ENCODE measurements at regions of chr2 and their contacts with region 1.

Region 1: GRCh38 chr2:178414266-178415247 is 36.4 kb downstream of the PRKRA start:
- DNase-seq: peak; percentile 68
- H3K4me3 ChIP-seq: peak overlapping the region; percentile 63
- CTCF ChIP-seq: peak; percentile 95

Region 2: DNA sequence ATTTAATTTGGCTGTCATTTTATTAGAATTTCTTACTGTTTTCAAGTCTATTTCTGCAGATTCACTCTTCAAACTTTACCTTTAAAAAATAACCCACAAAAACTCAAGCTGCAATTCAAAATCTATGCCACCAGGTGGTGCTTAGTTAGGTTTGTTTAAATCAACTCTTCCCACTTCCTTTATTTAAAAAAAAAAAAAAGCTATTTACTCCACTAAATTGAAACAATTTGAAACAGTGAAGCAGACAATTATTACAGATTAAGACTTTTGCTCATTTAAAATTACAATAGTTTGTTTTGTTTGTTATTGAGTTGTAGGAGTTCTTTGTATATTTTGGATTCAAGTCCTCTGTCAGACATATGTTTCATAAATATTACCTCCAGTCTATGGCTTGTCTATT is 642.0 kb before region 1 on chr2:
- CTCF ChIA-PET with region 1: interaction called, 11 read pairs
- POLR2A ChIA-PET with region 1: no interaction called
- DNase-seq: no peak
- H3K4me3 ChIP-seq: no peak overlapping the region
- CTCF ChIP-seq: peak; percentile 16

Region 3: GRCh38 chr2:177989029-177989885 is 425.3 kb before region 1 on chr2:
- CTCF ChIA-PET with region 1: interaction called, 20 read pairs
- POLR2A ChIA-PET with region 1: no interaction called
- DNase-seq: no peak
- H3K4me3 ChIP-seq: no peak overlapping the region
- CTCF ChIP-seq: no peak

Region 4: DNA sequence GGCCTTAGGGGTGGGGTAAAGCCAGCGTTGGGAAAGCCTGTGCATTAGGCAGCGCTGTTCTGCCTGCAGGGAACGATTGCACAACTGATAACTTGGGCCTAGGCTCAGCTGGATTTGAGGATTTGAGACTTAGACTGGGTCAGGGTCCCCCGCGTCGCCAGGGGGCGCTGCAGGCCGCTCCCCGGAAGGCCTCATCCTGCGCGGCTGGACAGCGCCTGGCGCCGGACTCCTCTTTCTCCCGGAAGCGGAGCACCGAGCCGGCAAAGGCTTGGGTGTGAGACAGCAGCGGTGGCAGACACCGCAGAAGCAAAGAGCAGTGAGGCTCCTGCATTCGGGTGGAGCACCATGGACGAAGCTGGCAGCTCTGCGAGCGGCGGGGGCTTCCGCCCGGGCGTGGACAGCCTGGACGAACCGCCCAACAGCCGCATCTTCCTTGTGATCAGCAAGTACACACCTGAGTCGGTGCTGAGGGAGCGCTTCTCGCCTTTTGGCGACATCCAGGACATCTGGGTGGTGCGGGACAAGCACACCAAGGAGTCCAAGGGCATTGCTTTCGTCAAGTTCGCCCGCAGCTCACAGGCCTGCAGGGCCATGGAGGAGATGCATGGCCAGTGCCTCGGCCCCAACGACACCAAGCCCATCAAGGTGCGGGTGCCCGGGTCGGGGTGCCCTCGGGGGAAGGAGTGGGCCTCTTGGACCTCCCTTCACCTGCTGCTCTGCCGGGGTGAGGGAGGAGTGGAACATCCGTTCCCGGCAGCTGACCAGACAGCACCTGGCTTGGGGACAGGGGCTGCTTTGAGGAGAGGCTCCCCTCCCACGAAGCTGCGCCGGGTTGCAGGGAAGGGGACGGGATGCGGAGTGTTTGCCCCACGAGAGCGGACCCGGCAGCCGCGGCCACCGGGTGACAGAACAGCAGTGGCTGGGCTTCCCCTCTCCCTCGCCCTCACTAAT is 302.1 kb before region 1 on chr2 and contains the start of gene RBM45:
- CTCF ChIA-PET with region 1: interaction called, 282 read pairs
- POLR2A ChIA-PET with region 1: interaction called, 3 read pairs
- DNase-seq: peak; percentile 38
- H3K4me3 ChIP-seq: peak within 1 kb of the TSS; percentile 74
- CTCF ChIP-seq: peak; percentile 98

Region 5: DNA sequence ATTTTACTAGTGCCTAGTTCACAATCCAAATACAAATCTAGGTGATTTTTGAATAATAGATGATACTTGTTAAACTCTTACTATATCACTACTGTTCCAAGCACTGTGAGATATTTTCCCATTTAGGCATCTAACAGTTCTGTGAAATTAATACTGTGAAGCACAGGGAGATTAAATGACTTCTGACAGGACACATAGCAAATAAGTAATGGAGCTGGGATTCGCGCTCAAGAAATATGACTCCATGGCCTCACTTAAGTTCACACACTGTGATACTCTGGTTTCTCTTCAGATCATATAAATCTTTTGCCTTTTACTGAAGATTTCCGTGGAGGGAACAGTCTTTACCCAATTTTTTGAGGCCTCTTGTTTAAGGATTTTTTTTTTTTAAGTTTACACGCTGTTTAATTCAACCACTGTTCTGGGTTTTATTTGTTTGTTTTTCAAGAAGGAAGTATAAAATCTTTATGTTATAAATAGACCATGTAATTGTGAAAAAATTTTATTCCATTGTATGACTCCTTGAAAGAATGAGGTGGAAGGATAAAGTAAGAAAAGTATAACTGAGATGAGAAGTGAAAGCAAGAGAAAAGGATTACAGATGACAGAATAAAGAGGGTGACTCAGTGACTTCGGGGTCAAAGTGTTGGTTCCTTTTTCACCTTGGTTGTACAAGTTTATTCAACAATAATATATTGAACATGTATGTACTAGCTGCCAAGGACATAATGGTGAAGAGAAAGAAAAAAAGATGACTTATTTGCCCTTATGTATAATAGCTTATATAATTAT is 272.1 kb before region 1 on chr2:
- CTCF ChIA-PET with region 1: interaction called, 231 read pairs
- POLR2A ChIA-PET with region 1: no interaction called
- DNase-seq: no peak
- H3K4me3 ChIP-seq: no peak overlapping the region
- CTCF ChIP-seq: no peak

Region 6: GRCh38 chr2:178397002-178397605 is 17.5 kb before region 1 on chr2:
- CTCF ChIA-PET with region 1: interaction called, 101 read pairs
- POLR2A ChIA-PET with region 1: no interaction called
- DNase-seq: no peak
- H3K4me3 ChIP-seq: no peak overlapping the region
- CTCF ChIP-seq: peak; percentile 42

Region 7: GRCh38 chr2:178426388-178426787 is 11.8 kb after region 1 on chr2:
- CTCF ChIA-PET with region 1: interaction called, 54 read pairs
- POLR2A ChIA-PET with region 1: interaction called, 3 read pairs
- DNase-seq: no peak
- H3K4me3 ChIP-seq: no peak overlapping the region
- CTCF ChIP-seq: no peak

Region 8: GRCh38 chr2:178592655-178593054 is 178.1 kb after region 1 on chr2:
- CTCF ChIA-PET with region 1: no interaction called
- POLR2A ChIA-PET with region 1: no interaction called
- DNase-seq: no peak
- H3K4me3 ChIP-seq: no peak overlapping the region
- CTCF ChIP-seq: no peak

Measured in AG04449 (cell line).